CD8-positive, alpha-beta T cell (primary cell): ENCODE measurements at regions of chr1 and their contacts with region 1.

Region 1: GRCh38 chr1:179293340-179294327 is at the start of gene SOAT1:
- DNase-seq: peak; percentile 82 to 97 (median 95)
- ATAC-seq: peak; percentile 96
- H3K4me3 ChIP-seq: peak within 1 kb of the TSS; percentile 88 to 92
- H3K4me3 Mint-ChIP-seq: peak within 1 kb of the TSS; percentile 91
- H3K27ac ChIP-seq: peak within 1 kb of the TSS; percentile 92 to 93
- H3K27ac Mint-ChIP-seq: peak within 1 kb of the TSS; percentile 93
- H3K4me1 ChIP-seq: peaks cover 39% of the 10 kb centered on the region
- H3K4me1 Mint-ChIP-seq: peaks cover 48% of the 10 kb centered on the region
- H3K27me3 ChIP-seq: no peaks in the 10 kb centered on the region
- H3K27me3 Mint-ChIP-seq: no peaks in the 10 kb centered on the region
- CTCF ChIP-seq: no peak
- total RNA-seq, gene SOAT1: 34.9 TPM

Region 2: GRCh38 chr1:178542560-178543356 is 750.9 kb before region 1 on chr1:
- CTCF ChIA-PET with region 1: no interaction called
- POLR2A ChIA-PET with region 1: no interaction called
- intact Hi-C with region 1: loop called in 1 of 2 experiments (anchors 2 kb)
- DNase-seq: peak; percentile 68 to 96 (median 85)
- ATAC-seq: peak; percentile 92
- H3K4me3 ChIP-seq: peak overlapping the region; percentile 75 to 92
- H3K4me3 Mint-ChIP-seq: peak overlapping the region; percentile 90
- H3K27ac ChIP-seq: peak overlapping the region in 1 of 2 experiments; percentile 22
- H3K27ac Mint-ChIP-seq: peak overlapping the region; percentile 62
- H3K4me1 ChIP-seq: peaks cover 11% of the 10 kb centered on the region
- H3K4me1 Mint-ChIP-seq: peaks cover 9% of the 10 kb centered on the region
- H3K27me3 ChIP-seq: no peaks in the 10 kb centered on the region
- H3K27me3 Mint-ChIP-seq: no peaks in the 10 kb centered on the region
- CTCF ChIP-seq: peak; percentile 98

Region 3: GRCh38 chr1:179025125-179025974 is 268.3 kb before region 1 on chr1 and contains the start of gene FAM20B:
- CTCF ChIA-PET with region 1: no interaction called
- POLR2A ChIA-PET with region 1: no interaction called
- intact Hi-C with region 1: loop called (anchors 1 to 2 kb)
- DNase-seq: peak; percentile 82 to 94 (median 90)
- ATAC-seq: peak; percentile 85
- H3K4me3 ChIP-seq: peak within 1 kb of the TSS; percentile 70 to 81
- H3K4me3 Mint-ChIP-seq: peak within 1 kb of the TSS; percentile 87
- H3K27ac ChIP-seq: peak within 1 kb of the TSS; percentile 77 to 83
- H3K27ac Mint-ChIP-seq: peak within 1 kb of the TSS; percentile 88
- H3K4me1 ChIP-seq: peaks cover 25% of the 10 kb centered on the region
- H3K4me1 Mint-ChIP-seq: peaks cover 40% of the 10 kb centered on the region
- H3K27me3 ChIP-seq: no peaks in the 10 kb centered on the region
- H3K27me3 Mint-ChIP-seq: no peaks in the 10 kb centered on the region
- CTCF ChIP-seq: no peak
- total RNA-seq, gene FAM20B: 11.1 to 11.2 TPM

Region 4: GRCh38 chr1:179121159-179121938 is 172.3 kb before region 1 on chr1:
- CTCF ChIA-PET with region 1: interaction called, 3 read pairs
- POLR2A ChIA-PET with region 1: interaction called, 4 read pairs
- intact Hi-C with region 1: loop called (anchors 1 to 2 kb)
- DNase-seq: peak in 7 of 9 experiments; percentile 6 to 63 (median 50)
- ATAC-seq: peak; percentile 44
- H3K4me3 ChIP-seq: no peak overlapping the region
- H3K4me3 Mint-ChIP-seq: no peak overlapping the region
- H3K27ac ChIP-seq: no peak overlapping the region
- H3K27ac Mint-ChIP-seq: no peak overlapping the region
- H3K4me1 ChIP-seq: no peaks in the 10 kb centered on the region
- H3K4me1 Mint-ChIP-seq: no peaks in the 10 kb centered on the region
- H3K27me3 ChIP-seq: no peaks in the 10 kb centered on the region
- H3K27me3 Mint-ChIP-seq: no peaks in the 10 kb centered on the region
- CTCF ChIP-seq: peak; percentile 55

Region 5: DNA sequence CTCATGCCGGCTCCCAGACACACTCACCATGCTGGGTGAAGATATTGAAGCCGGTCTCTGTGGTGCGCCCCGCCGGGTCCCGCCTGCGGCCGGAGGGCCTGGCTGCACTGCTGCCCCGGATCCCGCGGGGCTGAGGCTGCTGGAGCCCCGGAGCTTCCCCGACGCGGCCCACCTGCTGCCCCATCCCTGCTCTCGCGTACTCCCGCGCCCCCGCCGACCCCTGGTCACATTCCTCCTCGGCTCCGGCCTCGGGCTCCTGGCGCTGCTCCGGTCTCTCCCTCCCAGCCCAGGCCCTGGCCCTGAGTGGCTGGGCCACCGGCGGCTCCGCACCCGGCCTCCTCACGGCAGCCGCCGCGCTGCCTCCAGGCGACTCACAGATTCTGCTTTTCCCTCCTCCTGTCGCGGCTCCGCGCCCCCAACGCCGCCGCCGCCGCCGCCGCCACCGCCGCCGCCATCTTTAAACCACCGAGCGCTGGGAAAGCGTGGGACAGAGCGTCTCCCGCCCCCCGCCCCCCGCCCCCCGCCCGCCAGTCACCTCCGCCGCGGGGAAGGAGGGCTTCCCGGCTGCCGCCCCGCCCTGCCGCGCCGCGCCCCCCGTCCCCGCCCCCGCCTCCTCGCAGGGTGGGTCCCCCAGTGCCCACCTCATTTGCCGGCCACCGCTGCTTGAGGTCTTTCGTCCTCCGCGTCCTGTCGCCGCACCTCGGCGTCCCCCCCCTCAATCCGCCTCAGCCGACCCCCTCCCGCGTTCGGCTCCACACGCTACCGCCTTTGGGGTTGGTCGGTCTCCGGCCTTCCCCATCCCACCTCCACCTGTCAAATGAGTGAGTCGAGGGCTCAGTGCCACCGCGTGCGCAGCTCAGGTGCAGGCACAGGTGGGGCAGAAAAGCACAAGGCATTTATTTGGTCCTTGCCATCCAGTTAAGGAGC is 64.2 kb before region 1 on chr1 and contains the start of gene ABL2:
- CTCF ChIA-PET with region 1: no interaction called
- POLR2A ChIA-PET with region 1: no interaction called
- intact Hi-C with region 1: loop called (anchors 1 to 2 kb)
- DNase-seq: peak; percentile 1 to 74 (median 59)
- ATAC-seq: peak; percentile 63
- H3K4me3 ChIP-seq: peak within 1 kb of the TSS; percentile 67
- H3K4me3 Mint-ChIP-seq: peak within 1 kb of the TSS; percentile 90
- H3K27ac ChIP-seq: peak within 1 kb of the TSS; percentile 51 to 53
- H3K27ac Mint-ChIP-seq: peak within 1 kb of the TSS; percentile 91
- H3K4me1 ChIP-seq: peaks cover 14% of the 10 kb centered on the region
- H3K4me1 Mint-ChIP-seq: peaks cover 32% of the 10 kb centered on the region
- H3K27me3 ChIP-seq: no peaks in the 10 kb centered on the region
- H3K27me3 Mint-ChIP-seq: no peaks in the 10 kb centered on the region
- CTCF ChIP-seq: no peak
- total RNA-seq, gene ABL2: 12.4 to 14.6 TPM

Region 6: GRCh38 chr1:179882243-179883039 is 588.8 kb after region 1 on chr1 and contains the start of gene TOR1AIP1:
- CTCF ChIA-PET with region 1: no interaction called
- POLR2A ChIA-PET with region 1: interaction called, 4 read pairs
- intact Hi-C with region 1: loop called (anchors 2 to 10 kb)
- DNase-seq: peak; percentile 95 to 99 (median 97)
- ATAC-seq: peak; percentile 74
- H3K4me3 ChIP-seq: peak within 1 kb of the TSS; percentile 91 to 95
- H3K4me3 Mint-ChIP-seq: peak within 1 kb of the TSS; percentile 94
- H3K27ac ChIP-seq: peak within 1 kb of the TSS; percentile 98 to 99
- H3K27ac Mint-ChIP-seq: peak within 1 kb of the TSS; percentile 100
- H3K4me1 ChIP-seq: peaks cover 37% of the 10 kb centered on the region
- H3K4me1 Mint-ChIP-seq: peaks cover 59% of the 10 kb centered on the region
- H3K27me3 ChIP-seq: no peaks in the 10 kb centered on the region
- H3K27me3 Mint-ChIP-seq: no peaks in the 10 kb centered on the region
- CTCF ChIP-seq: peak; percentile 41
- total RNA-seq, gene TOR1AIP1: 108 to 110 TPM

Region 7: DNA sequence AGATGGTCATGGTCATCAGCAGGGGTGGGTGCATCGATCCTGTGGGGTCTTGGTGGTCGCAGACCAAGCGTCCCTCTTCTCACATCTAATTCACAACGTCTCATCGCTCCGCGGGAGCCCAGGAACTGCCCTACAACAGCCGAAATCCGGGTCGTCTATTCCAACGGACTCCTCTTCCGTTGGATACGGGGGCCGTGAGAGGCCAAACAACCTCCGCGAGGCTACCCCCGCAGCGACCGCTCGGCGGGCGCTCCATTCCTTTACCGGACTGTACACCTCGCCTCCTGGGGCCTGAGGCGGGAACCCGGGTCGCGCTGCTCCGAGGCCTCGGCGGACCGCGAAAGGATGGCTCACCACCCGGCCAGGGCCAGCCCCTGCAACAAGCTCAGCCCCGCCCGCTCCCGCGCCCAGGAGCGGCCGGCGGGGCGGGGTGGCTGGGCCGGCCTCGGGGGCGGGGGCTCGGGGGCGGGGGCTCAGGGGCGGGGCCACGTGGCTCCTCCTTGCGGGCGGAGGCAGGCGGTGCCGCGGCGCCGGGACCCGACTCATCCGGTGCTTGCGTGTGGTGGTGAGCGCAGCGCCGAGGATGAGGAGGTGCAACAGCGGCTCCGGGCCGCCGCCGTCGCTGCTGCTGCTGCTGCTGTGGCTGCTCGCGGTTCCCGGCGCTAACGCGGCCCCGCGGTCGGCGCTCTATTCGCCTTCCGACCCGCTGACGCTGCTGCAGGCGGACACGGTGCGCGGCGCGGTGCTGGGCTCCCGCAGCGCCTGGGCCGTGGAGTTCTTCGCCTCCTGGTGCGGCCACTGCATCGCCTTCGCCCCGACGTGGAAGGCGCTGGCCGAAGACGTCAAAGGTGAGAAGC is 860.9 kb after region 1 on chr1 and contains the start of gene QSOX1:
- CTCF ChIA-PET with region 1: no interaction called
- POLR2A ChIA-PET with region 1: no interaction called
- intact Hi-C with region 1: loop called in 1 of 2 experiments (anchors 10 kb)
- DNase-seq: peak; percentile 77 to 95 (median 88)
- ATAC-seq: peak; percentile 96
- H3K4me3 ChIP-seq: peak within 1 kb of the TSS; percentile 86
- H3K4me3 Mint-ChIP-seq: peak within 1 kb of the TSS; percentile 91
- H3K27ac ChIP-seq: peak within 1 kb of the TSS; percentile 60 to 62
- H3K27ac Mint-ChIP-seq: peak within 1 kb of the TSS; percentile 87
- H3K4me1 ChIP-seq: peaks cover 22% of the 10 kb centered on the region
- H3K4me1 Mint-ChIP-seq: peaks cover 43% of the 10 kb centered on the region
- H3K27me3 ChIP-seq: no peaks in the 10 kb centered on the region
- H3K27me3 Mint-ChIP-seq: no peaks in the 10 kb centered on the region
- CTCF ChIP-seq: no peak
- total RNA-seq, gene QSOX1: 12.8 to 12.9 TPM